Heart left ventricle (tissue), 16 donors: ENCODE measurements at regions of chr7 and their contacts with region 1.

Region 1: GRCh38 chr7:47571331-47572093 is 10.4 kb downstream of the TNS3 start:
- DNase-seq: peak; percentile 80 to 93 (median 90)
- ATAC-seq: peak; percentile 49 to 83 (median 76)
- H3K4me3 ChIP-seq: peak overlapping the region in 9 of 12 donors; percentile 2 to 29 (median 16)
- H3K27ac ChIP-seq: peak overlapping the region; percentile 51 to 93 (median 82)
- H3K4me1 ChIP-seq: peaks cover 0 to 85% (median 42%) of the 10 kb centered on the region in 12 donors
- H3K27me3 ChIP-seq: no peaks in the 10 kb centered on the region
- CTCF ChIP-seq: no peak
- POLR2A ChIP-seq: no peak

Region 2: DNA sequence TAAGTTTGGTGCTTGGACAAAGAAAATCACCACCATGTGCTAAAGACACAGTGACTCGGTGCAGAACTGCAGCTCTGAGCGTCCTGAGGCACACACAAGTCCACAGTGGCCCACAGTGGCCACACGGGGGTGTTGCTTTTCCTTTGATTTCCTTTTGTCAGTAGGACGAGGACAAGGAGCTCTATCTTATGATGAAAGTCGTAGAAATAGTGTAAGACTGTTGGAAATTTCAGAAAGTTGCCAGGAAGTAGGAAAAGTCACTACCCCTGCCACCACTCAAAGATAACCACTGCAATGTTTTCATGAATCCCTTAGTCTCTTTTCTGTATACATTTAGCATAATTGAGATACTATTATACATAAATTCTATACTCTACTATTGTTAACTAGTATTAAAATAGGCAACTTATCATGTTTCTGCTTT is 135.6 kb before region 1 on chr7:
- intact Hi-C with region 1: loop called in 1 of 10 experiments (anchors 5 kb)
- DNase-seq: peak in 4 of 5 donors; percentile 68 to 83 (median 72)
- ATAC-seq: peak; percentile 82 to 92 (median 87)
- H3K4me3 ChIP-seq: no peak overlapping the region
- H3K27ac ChIP-seq: no peak overlapping the region
- H3K4me1 ChIP-seq: peaks cover 0 to 5% (median 0%) of the 10 kb centered on the region in 12 donors
- H3K27me3 ChIP-seq: no peaks in the 10 kb centered on the region
- CTCF ChIP-seq: peak; percentile 63 to 87 (median 78)
- POLR2A ChIP-seq: no peak

Region 3: DNA sequence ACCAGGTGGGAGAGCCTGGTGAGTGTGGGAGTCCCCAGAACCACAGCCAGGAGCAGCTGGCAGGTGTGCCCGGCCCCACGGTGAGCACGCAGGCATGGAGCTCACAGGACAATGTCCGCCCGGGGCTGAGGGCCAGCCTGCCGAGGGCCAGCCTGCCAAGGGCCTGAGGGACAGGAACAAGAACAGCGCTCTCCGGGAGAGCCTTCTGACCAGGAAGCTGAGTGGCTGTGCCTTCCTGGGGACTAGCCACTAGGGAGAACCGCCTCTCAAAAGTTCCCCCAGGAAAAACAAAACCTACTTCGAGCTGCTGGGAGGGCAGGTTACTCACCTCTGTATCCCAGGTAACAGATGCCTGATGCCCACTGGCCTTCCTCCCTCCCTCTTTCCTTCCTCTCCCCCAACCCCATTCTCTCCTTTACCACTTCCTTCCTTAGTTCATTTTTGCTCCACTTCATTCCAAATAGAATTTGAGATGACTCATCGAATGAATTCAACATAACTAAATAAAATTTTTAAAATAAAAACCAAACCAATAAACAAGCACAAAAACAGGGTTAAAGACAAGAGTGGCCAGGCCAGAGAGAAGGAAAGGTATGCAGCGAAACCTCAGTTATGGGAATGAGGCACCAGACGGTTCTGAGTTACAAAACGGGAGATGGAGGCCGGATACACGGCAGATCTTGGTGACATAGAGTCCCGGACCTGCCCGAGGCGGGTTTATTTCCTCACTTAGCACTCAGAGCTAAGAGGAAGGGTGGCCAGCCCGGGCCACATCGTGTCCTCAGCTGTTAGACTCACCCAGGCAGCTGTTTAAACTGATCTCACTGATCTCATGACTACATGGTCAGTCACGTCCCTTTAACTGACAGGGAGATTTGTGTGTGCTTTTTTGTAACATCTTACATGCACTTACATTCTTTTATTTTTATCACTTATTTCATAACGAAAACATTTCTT is 118.1 kb before region 1 on chr7:
- intact Hi-C with region 1: loop called in 4 of 10 experiments (anchors 5 to 10 kb)
- DNase-seq: peak; percentile 47 to 77 (median 75)
- ATAC-seq: peak; percentile 67 to 81 (median 76)
- H3K4me3 ChIP-seq: peak overlapping the region in 11 of 12 donors; percentile 4 to 53 (median 38)
- H3K27ac ChIP-seq: peak overlapping the region; percentile 58 to 89 (median 83)
- H3K4me1 ChIP-seq: peaks cover 3 to 59% (median 40%) of the 10 kb centered on the region in 12 donors
- H3K27me3 ChIP-seq: no peaks in the 10 kb centered on the region
- CTCF ChIP-seq: no peak
- POLR2A ChIP-seq: no peak

Region 4: GRCh38 chr7:47482013-47482875 is 89.3 kb before region 1 on chr7:
- intact Hi-C with region 1: loop called in 2 of 10 experiments (anchors 5 to 10 kb)
- DNase-seq: peak in 4 of 5 donors; percentile 57 to 83 (median 66)
- ATAC-seq: peak; percentile 74 to 87 (median 76)
- H3K4me3 ChIP-seq: peak overlapping the region in 2 of 12 donors; percentile 1 to 25
- H3K27ac ChIP-seq: peak overlapping the region; percentile 54 to 93 (median 82)
- H3K4me1 ChIP-seq: peaks cover 7 to 80% (median 60%) of the 10 kb centered on the region in 12 donors
- H3K27me3 ChIP-seq: no peaks in the 10 kb centered on the region
- CTCF ChIP-seq: no peak
- POLR2A ChIP-seq: no peak

Region 5: DNA sequence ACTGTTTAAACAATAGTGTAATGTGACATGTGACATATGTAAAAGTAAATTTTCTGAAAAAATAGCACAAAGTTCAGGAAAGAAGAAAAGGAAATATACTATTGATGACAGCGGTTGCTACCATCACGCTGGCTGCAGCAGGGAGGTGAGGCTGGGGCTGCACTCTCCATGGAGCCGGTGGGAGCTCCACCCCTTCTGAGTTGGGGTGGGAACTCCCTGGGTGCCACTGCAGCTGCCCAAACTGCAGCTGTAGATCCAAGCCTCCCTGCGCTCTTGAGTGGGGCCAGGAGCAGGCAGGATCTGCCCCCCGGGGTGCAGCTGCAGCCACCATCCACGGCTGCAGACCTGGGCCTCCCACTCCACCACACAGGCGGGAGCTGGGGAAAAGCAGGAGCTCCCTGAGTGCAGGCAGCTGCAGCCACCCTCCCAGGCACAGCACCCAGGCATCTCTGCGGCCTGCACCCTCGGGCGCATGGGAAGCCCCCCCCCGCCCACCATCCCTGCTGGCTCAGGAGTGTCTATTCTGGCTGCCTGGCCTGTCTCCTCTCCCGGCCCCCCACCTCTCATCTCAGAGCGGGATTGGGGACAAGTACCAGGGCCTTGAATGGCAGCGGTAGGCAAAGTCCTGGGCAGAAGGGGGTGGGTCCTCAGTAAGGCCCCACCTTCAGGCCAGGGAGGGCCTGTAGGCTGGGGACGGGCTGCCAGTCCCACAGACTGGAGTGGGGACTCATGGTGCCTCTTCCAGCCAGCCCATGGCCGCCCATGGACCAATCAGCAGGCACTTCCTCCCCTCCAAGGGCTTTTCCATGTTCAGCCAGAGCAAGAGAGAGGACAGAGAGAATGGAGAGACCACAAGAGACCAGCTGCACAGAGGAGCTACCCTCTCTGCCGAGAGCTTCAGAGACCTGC is 39.7 kb before region 1 on chr7:
- intact Hi-C with region 1: no loop called
- DNase-seq: no peak
- ATAC-seq: peak in 3 of 4 donors; percentile 12 to 45 (median 28)
- H3K4me3 ChIP-seq: no peak overlapping the region
- H3K27ac ChIP-seq: no peak overlapping the region
- H3K4me1 ChIP-seq: peaks cover 0 to 15% (median 4%) of the 10 kb centered on the region in 12 donors
- H3K27me3 ChIP-seq: no peaks in the 10 kb centered on the region
- CTCF ChIP-seq: no peak
- POLR2A ChIP-seq: no peak

Region 6: DNA sequence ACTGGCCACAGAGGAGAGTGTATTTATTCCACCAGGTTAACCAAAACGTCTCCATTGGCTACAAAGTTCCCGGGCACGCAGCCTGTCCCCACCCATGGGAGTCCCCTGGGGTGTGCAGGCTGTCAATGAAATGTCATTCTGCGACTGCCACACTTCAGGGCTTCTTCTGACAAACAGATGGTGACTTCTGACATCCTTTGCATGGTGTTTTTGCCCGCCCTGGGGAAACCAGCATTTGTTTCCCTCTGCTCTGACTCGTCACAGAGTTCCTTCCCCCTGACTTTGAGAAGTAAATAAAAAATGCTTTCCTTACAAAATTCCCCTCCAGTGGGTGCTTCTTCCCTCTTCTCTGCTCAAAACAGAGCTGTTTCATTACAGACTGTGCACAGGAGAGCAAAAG is 27.8 kb before region 1 on chr7:
- intact Hi-C with region 1: loop called in 1 of 10 experiments (anchors 2 kb)
- DNase-seq: no peak
- ATAC-seq: no peak
- H3K4me3 ChIP-seq: no peak overlapping the region
- H3K27ac ChIP-seq: peak overlapping the region in 1 of 12 donors; percentile 46
- H3K4me1 ChIP-seq: peaks cover 0 to 10% (median 0%) of the 10 kb centered on the region in 12 donors
- H3K27me3 ChIP-seq: no peaks in the 10 kb centered on the region
- CTCF ChIP-seq: no peak
- POLR2A ChIP-seq: no peak